ENCODE measurements at regions of chr11 and their contacts with region 1.

Region 1: DNA sequence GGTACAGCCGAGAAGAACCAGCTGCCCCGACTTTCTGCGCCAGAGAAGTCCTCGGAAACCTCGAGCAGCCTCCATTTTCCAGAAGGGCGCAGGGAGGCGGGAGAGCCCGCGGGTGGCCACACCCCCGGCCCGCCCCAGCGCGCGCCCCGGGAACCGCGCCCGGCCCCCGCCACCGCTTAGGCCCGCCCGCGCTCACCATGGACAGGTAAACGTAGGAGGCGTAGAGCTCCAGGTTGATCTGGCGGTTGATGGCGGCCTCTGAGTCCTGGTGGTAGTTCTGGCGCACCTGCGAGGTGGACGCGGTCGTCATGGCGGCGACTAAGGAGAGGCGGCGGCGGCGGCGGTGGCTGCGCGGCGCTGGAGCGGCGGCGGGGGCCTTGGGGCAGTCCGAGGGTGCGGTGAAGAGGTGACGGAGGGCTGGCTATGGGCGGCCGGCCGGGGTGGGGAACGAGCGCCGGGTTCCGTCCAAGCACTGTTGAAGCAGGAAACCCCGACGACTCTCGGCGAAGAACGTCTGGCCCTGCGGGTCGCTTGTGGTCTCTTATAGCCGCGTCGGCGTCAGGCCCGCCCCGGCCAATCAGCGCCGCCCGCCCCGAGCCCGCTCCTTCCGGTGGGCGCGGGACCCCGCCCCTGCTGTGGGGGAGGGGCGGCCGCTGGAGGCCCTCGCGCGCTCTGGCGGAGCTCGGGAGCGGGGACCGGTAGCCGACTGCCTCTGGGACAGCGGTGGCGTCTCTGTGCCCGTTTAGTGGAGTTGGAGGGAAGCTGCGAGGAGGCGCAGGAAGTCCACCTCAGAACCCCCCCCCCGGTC is at the start of gene FTH1:
- DNase-seq: peak; percentile 86 to 96 (median 94)
- H3K4me3 ChIP-seq: peak within 1 kb of the TSS; percentile 56 to 100 (median 96)
- H3K27ac ChIP-seq: peak within 1 kb of the TSS; percentile 92 to 100 (median 99)
- H3K27me3 ChIP-seq: no peaks in the 10 kb centered on the region
- CTCF ChIP-seq: peak in 24 of 56 donors; percentile 8 to 49 (median 21)
- total RNA-seq, gene FTH1: 2,016 to 5,225 (median 3,057) TPM

Region 2: DNA sequence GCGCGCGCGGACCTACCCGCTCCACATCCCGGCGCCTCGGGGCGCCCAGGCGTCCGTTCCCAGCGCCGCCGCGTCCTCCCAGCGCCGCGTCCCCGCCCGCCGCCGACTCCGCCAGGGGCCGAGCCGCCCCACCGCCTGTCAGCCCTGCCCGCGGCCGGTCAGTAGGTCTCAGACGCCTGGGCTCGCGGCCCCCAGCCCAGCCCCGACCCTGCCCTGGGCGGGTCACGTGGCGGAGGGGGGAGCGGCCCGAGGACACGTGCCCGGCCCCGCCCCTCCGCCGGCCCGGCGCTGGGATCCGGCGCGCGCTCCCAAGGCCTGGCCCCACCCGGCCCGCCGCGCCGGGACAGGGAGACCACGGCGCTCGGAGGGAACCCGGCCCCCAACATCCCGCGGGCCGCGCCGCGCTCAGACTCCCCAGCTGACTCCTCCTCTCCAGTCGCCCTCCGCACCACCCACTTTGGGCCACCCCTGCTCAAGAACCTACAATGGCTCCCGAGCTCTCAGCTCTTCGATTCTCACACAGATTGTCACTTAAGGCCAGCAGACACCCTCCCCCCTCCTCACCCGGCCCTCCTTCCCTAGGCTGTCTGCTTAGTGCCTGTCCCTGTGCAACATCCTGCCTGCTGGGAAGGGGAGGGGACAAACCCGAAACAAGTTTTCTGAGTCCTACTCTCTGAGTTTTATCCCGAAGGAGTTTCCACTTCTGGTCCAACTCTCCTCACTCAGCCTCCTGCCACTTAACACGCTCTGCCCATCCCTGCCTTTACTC is 49.8 kb before region 1 on chr11 and contains the start of gene RAB3IL1:
- intact Hi-C with region 1: no loop called
- DNase-seq: peak in 6 of 10 donors; percentile 18 to 80 (median 50)
- H3K4me3 ChIP-seq: peak within 1 kb of the TSS; percentile 48 to 87 (median 71)
- H3K27ac ChIP-seq: peak within 1 kb of the TSS in 48 of 59 donors; percentile 6 to 84 (median 60)
- H3K27me3 ChIP-seq: no peaks in the 10 kb centered on the region
- CTCF ChIP-seq: peak in 1 of 56 donors; percentile 14
- total RNA-seq, gene RAB3IL1: 5.8 to 23.3 (median 10.7) TPM

Region 3: DNA sequence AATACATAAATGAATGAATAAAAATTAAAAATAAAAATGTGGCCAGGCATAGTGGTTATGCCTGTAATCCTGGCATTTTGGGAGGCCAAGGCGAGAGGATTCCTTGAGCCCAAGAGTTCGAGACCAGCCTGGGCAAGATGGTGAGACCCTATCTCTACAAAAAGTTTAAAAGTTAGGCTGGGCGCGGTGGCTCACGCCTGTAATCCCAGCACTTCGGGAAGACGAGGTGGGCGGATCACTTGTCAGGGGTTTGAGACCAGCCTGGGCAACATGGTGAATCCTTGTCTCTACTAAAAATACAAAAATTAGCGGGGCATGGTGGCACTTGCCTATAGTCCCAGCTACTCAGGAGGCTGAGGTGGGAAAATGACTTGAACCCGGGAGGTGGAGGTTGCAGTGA is 26.9 kb before region 1 on chr11:
- intact Hi-C with region 1: no loop called
- DNase-seq: peak in 1 of 10 donors; percentile 18
- H3K4me3 ChIP-seq: no peak overlapping the region
- H3K27ac ChIP-seq: no peak overlapping the region
- H3K27me3 ChIP-seq: no peaks in the 10 kb centered on the region
- CTCF ChIP-seq: no peak

Region 4: GRCh38 chr11:61994981-61995380 is 27.7 kb after region 1 on chr11:
- intact Hi-C with region 1: loop called in 1 of 2 experiments (anchors 1 kb)
- DNase-seq: no peak
- H3K4me3 ChIP-seq: peak overlapping the region in 13 of 59 donors; percentile 7 to 47 (median 20)
- H3K27ac ChIP-seq: peak overlapping the region; percentile 0 to 99 (median 94)
- H3K27me3 ChIP-seq: no peaks in the 10 kb centered on the region
- CTCF ChIP-seq: peak in 2 of 56 donors; percentile 11 to 20

Region 5: DNA sequence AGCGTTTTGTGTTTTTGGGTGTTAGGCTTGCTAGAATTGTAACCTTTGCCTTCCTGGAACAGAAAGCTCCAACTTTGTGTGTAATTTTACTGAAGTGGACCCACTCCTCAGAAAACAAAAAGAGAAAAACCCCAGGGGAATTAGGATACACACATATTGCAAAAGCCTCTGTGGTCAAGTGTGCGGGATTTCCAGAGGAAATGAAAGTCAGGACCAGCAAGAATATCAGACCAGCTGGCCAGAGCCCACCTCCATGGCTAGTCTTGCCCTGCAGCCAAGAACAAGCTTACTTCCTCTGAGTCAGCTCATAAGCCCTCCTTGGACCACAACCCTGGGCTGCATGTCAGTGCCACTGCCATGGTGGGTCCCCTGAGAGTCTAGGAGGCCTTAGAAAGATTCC is 37.2 kb after region 1 on chr11:
- intact Hi-C with region 1: loop called in 1 of 2 experiments (anchors 2 kb)
- DNase-seq: peak in 4 of 10 donors; percentile 11 to 40 (median 28)
- H3K4me3 ChIP-seq: no peak overlapping the region
- H3K27ac ChIP-seq: peak overlapping the region in 57 of 59 donors; percentile 74 to 96 (median 89)
- H3K27me3 ChIP-seq: no peaks in the 10 kb centered on the region
- CTCF ChIP-seq: no peak

Region 6: DNA sequence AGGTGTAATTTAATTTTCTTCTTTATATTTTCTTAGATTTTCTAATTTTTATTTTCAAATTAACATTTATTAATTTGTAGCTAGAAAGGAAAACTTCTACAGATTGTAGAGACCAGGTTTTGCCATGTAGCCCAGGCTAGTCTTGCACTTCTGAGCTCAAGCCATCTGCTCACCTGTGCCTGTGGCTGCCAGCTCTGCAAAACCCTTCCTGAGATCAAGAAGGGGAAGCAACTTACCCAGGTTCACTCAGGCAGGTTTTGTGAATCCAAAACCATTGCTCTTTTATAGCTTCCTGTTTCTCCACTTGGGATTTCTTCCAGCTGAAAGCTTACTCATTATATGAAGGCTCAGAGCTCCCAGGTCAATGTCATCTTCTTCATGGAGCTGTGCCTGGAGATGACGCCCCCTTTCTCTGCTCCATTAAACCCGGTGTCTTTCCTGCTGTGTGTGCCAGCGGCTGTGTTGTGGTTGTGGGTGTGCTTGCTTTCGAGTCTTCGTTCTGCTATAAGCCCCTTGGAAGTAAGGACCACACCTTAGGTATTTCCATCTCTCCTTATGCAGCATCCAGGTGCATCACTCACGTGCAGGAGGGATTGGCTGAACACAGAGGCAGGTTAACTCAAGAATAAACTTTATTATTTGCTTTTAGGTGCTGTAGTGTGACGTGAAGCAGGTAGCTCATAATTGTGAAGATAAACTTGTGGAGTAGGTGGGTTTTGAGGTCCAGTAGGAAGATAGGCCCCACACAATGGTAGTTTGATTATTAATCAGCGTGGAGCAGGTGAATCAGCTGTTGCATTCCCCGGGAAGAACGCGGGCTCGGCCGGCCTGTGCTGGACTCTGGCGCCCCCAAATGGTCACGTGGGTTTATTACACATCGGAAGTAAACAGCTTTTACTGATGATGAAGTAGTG is 114.3 kb after region 1 on chr11:
- intact Hi-C with region 1: loop called (anchors 5 kb)
- DNase-seq: peak; percentile 78 to 92 (median 86)
- H3K4me3 ChIP-seq: peak overlapping the region in 52 of 59 donors; percentile 1 to 59 (median 40)
- H3K27ac ChIP-seq: peak overlapping the region in 25 of 59 donors; percentile 12 to 78 (median 38)
- H3K27me3 ChIP-seq: no peaks in the 10 kb centered on the region
- CTCF ChIP-seq: peak; percentile 76 to 100 (median 95)

Measured in dorsolateral prefrontal cortex (tissue), 120 donors.